CD8-positive, alpha-beta T cell (primary cell): ENCODE measurements at regions of chr2 and their contacts with region 1.

Region 1: GRCh38 chr2:197777823-197778407 is 7.2 kb downstream of the BOLL start:
- DNase-seq: peak in 3 of 9 experiments; percentile 38 to 58 (median 48)
- ATAC-seq: no peak
- H3K4me3 ChIP-seq: no peak overlapping the region
- H3K4me3 Mint-ChIP-seq: no peak overlapping the region
- H3K27ac ChIP-seq: no peak overlapping the region
- H3K27ac Mint-ChIP-seq: no peak overlapping the region
- H3K4me1 ChIP-seq: no peaks in the 10 kb centered on the region
- H3K4me1 Mint-ChIP-seq: no peaks in the 10 kb centered on the region
- H3K27me3 ChIP-seq: no peaks in the 10 kb centered on the region
- H3K27me3 Mint-ChIP-seq: no peaks in the 10 kb centered on the region
- CTCF ChIP-seq: peak; percentile 97

Region 2: GRCh38 chr2:197011799-197012641 is 765.9 kb before region 1 on chr2:
- CTCF ChIA-PET with region 1: no interaction called
- POLR2A ChIA-PET with region 1: no interaction called
- intact Hi-C with region 1: loop called (anchors 5 to 10 kb)
- DNase-seq: peak in 3 of 9 experiments; percentile 14 to 69 (median 57)
- ATAC-seq: peak; percentile 59
- H3K4me3 ChIP-seq: no peak overlapping the region
- H3K4me3 Mint-ChIP-seq: no peak overlapping the region
- H3K27ac ChIP-seq: no peak overlapping the region
- H3K27ac Mint-ChIP-seq: peak overlapping the region; percentile 46
- H3K4me1 ChIP-seq: no peaks in the 10 kb centered on the region
- H3K4me1 Mint-ChIP-seq: peaks cover 6% of the 10 kb centered on the region
- H3K27me3 ChIP-seq: no peaks in the 10 kb centered on the region
- H3K27me3 Mint-ChIP-seq: no peaks in the 10 kb centered on the region
- CTCF ChIP-seq: peak; percentile 78

Region 3: DNA sequence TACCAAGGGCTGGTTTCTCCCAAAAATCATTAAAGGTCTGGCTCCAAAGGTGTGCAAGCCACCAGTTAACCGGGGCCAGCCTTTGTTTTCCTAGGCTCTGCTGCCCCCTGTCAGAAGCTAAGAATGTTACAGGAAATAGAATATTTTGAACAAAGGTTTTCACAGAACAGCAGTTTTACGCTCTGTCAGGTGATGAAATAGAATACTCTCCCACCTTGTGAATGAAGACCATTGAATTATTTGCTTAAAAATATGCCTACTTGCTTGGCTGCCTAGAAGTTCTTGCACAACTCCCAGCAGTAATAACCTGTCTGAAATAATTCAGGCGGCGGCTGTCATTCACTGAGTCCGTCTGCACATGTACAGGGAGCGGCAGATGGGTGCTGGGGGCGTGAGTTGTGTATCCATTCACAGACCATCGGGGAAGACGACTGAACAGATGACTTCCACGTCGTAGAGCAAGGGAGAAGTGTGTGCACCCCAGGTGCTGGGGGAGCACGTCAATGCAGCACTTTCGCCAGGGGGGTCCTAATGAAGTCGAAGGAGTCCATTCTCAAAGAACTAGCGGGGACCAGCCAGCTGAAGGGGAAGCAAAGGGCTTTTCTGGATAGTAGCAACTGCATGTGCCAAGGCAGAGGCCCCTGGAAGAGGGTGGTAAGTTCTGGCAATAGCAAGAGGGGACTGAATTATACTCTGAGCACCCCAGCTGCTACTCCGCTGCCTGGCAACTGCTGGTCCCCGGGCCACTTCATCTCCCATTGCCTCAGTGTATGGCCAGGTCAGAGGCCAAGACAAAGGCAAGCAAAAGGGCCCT is 399.2 kb before region 1 on chr2:
- CTCF ChIA-PET with region 1: no interaction called
- POLR2A ChIA-PET with region 1: no interaction called
- intact Hi-C with region 1: loop called in 1 of 2 experiments (anchors 5 kb)
- DNase-seq: peak; percentile 24 to 78 (median 62)
- ATAC-seq: peak; percentile 57
- H3K4me3 ChIP-seq: no peak overlapping the region
- H3K4me3 Mint-ChIP-seq: no peak overlapping the region
- H3K27ac ChIP-seq: no peak overlapping the region
- H3K27ac Mint-ChIP-seq: no peak overlapping the region
- H3K4me1 ChIP-seq: peaks cover 7% of the 10 kb centered on the region
- H3K4me1 Mint-ChIP-seq: peaks cover 12% of the 10 kb centered on the region
- H3K27me3 ChIP-seq: no peaks in the 10 kb centered on the region
- H3K27me3 Mint-ChIP-seq: no peaks in the 10 kb centered on the region
- CTCF ChIP-seq: peak; percentile 93

Region 4: GRCh38 chr2:197434541-197435513 is 343.1 kb before region 1 on chr2 and contains the start of gene SF3B1:
- CTCF ChIA-PET with region 1: no interaction called
- POLR2A ChIA-PET with region 1: no interaction called
- intact Hi-C with region 1: loop called (anchors 5 kb)
- DNase-seq: peak; percentile 98 to 100 (median 99)
- ATAC-seq: peak; percentile 96
- H3K4me3 ChIP-seq: peak within 1 kb of the TSS; percentile 95 to 99
- H3K4me3 Mint-ChIP-seq: peak within 1 kb of the TSS; percentile 100
- H3K27ac ChIP-seq: peak within 1 kb of the TSS; percentile 98 to 99
- H3K27ac Mint-ChIP-seq: peak within 1 kb of the TSS; percentile 100
- H3K4me1 ChIP-seq: peaks cover 43% of the 10 kb centered on the region
- H3K4me1 Mint-ChIP-seq: peaks cover 53% of the 10 kb centered on the region
- H3K27me3 ChIP-seq: no peaks in the 10 kb centered on the region
- H3K27me3 Mint-ChIP-seq: no peaks in the 10 kb centered on the region
- CTCF ChIP-seq: no peak
- total RNA-seq, gene SF3B1: 525 to 526 TPM

Region 5: GRCh38 chr2:197599285-197599965 is 178.5 kb before region 1 on chr2:
- CTCF ChIA-PET with region 1: interaction called, 3 read pairs
- POLR2A ChIA-PET with region 1: no interaction called
- intact Hi-C with region 1: loop called in 1 of 2 experiments (anchors 5 kb)
- DNase-seq: peak in 8 of 9 experiments; percentile 4 to 67 (median 40)
- ATAC-seq: peak; percentile 99
- H3K4me3 ChIP-seq: no peak overlapping the region
- H3K4me3 Mint-ChIP-seq: peak overlapping the region; percentile 57
- H3K27ac ChIP-seq: no peak overlapping the region
- H3K27ac Mint-ChIP-seq: no peak overlapping the region
- H3K4me1 ChIP-seq: peaks cover 4% of the 10 kb centered on the region
- H3K4me1 Mint-ChIP-seq: peaks cover 5% of the 10 kb centered on the region
- H3K27me3 ChIP-seq: no peaks in the 10 kb centered on the region
- H3K27me3 Mint-ChIP-seq: peaks cover 4% of the 10 kb centered on the region
- CTCF ChIP-seq: peak; percentile 38

Region 6: GRCh38 chr2:197647961-197648690 is 129.8 kb before region 1 on chr2:
- CTCF ChIA-PET with region 1: no interaction called
- POLR2A ChIA-PET with region 1: no interaction called
- intact Hi-C with region 1: no loop called
- DNase-seq: no peak
- ATAC-seq: no peak
- H3K4me3 ChIP-seq: no peak overlapping the region
- H3K4me3 Mint-ChIP-seq: no peak overlapping the region
- H3K27ac ChIP-seq: no peak overlapping the region
- H3K27ac Mint-ChIP-seq: no peak overlapping the region
- H3K4me1 ChIP-seq: no peaks in the 10 kb centered on the region
- H3K4me1 Mint-ChIP-seq: no peaks in the 10 kb centered on the region
- H3K27me3 ChIP-seq: no peaks in the 10 kb centered on the region
- H3K27me3 Mint-ChIP-seq: peaks cover 9% of the 10 kb centered on the region
- CTCF ChIP-seq: no peak

Region 7: DNA sequence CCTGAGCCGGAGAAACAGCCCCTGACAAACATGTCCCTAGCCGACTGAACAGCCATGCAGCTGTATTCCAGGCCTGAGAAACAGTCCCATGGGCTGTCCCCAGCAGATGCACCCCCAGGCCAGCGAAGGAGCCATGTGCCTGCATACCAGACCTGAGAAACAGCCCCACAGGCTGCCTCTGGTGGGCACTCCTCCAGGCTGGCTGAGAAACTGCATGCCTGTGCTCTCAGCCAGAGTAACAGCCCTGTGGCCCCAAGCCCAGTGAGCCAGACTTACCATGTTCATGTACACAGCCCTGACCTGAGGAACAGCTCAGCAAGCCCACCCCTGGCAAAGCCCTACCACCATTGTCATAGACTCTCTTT is 17.6 kb before region 1 on chr2:
- CTCF ChIA-PET with region 1: no interaction called
- POLR2A ChIA-PET with region 1: no interaction called
- intact Hi-C with region 1: no loop called
- DNase-seq: no peak
- ATAC-seq: no peak
- H3K4me3 ChIP-seq: no peak overlapping the region
- H3K4me3 Mint-ChIP-seq: no peak overlapping the region
- H3K27ac ChIP-seq: no peak overlapping the region
- H3K27ac Mint-ChIP-seq: no peak overlapping the region
- H3K4me1 ChIP-seq: no peaks in the 10 kb centered on the region
- H3K4me1 Mint-ChIP-seq: no peaks in the 10 kb centered on the region
- H3K27me3 ChIP-seq: no peaks in the 10 kb centered on the region
- H3K27me3 Mint-ChIP-seq: peaks cover 9% of the 10 kb centered on the region
- CTCF ChIP-seq: no peak